ENCODE measurements at regions of chr12 and their contacts with region 1.

Region 1: DNA sequence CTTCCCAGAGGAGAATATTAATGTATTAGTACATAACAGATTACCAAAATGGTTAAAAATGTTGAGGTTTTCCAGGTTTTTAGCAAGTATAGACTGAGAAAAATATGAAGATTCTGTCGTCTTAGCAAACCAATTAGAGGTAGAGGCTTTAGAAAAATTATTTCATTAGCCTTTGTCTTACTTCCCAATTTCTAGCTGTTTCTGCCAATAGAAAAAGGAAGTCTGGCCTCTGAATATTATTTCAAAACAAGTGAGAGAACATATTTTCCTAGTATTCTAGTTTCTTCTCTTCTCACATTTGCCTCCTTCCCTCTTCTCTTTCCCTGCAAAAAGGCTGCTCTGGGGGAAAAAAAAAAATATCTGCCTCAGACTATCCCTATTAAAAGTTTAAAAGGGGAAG is 16.4 kb downstream of the IPO8 start:
- DNase-seq: no peak
- H3K4me3 ChIP-seq: no peak overlapping the region
- H3K27ac ChIP-seq: no peak overlapping the region
- H3K4me1 ChIP-seq: peaks cover 9% of the 10 kb centered on the region
- H3K27me3 ChIP-seq: no peaks in the 10 kb centered on the region
- CTCF ChIP-seq: no peak
- POLR2A ChIP-seq: no peak

Region 2: GRCh38 chr12:30643366-30643765 is 35.9 kb before region 1 on chr12:
- CTCF ChIA-PET with region 1: no interaction called
- POLR2A ChIA-PET with region 1: no interaction called
- dilution Hi-C with region 1: no loop called
- intact Hi-C with region 1: loop called (anchors 2 kb)
- DNase-seq: no peak
- H3K4me3 ChIP-seq: no peak overlapping the region
- H3K27ac ChIP-seq: no peak overlapping the region
- H3K4me1 ChIP-seq: no peaks in the 10 kb centered on the region
- H3K27me3 ChIP-seq: no peaks in the 10 kb centered on the region
- CTCF ChIP-seq: no peak
- POLR2A ChIP-seq: no peak

Region 3: DNA sequence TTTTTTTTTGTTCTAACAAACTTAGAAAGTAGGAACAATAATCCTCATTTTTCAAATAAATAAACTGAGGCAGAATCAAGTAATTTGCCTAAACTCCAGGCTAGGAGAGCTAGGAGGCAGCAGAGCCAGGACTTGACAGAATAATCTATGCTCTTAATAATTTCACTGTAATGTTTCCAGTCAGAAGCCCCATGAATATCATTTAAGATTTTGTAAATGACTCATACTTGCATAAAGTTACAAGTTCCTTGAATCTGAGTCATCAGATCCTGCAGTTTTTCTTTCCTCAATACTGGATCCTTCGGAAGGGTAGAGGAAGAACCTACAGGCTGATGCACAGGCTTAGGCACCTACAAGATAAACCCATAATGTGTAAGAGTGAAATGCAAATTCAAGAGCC is 46.5 kb after region 1 on chr12:
- CTCF ChIA-PET with region 1: no interaction called
- POLR2A ChIA-PET with region 1: no interaction called
- dilution Hi-C with region 1: no loop called
- intact Hi-C with region 1: no loop called
- DNase-seq: peak; percentile 73
- H3K4me3 ChIP-seq: no peak overlapping the region
- H3K27ac ChIP-seq: peak overlapping the region; percentile 28
- H3K4me1 ChIP-seq: peaks cover 18% of the 10 kb centered on the region
- H3K27me3 ChIP-seq: no peaks in the 10 kb centered on the region
- CTCF ChIP-seq: no peak
- POLR2A ChIP-seq: no peak

Region 4: DNA sequence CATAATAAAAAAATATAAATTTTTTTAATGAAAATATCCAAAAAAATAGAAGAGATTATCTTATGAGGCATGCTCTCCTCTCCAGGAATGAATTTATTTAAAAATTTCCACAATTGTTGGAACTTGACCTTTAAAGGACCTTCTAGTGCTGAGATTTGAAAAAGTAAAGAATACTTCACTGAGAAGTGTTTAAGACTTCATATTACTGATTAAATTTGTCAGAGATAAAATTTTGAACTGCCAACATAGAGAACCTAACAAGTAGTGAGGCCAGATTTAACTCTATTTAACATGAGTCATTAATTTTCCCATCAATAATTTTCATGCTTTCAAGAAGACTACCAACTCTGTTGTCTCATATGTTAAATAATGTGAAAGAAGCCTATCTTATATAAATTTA is 61.0 kb after region 1 on chr12:
- CTCF ChIA-PET with region 1: no interaction called
- POLR2A ChIA-PET with region 1: no interaction called
- dilution Hi-C with region 1: no loop called
- intact Hi-C with region 1: no loop called
- DNase-seq: no peak
- H3K4me3 ChIP-seq: no peak overlapping the region
- H3K27ac ChIP-seq: no peak overlapping the region
- H3K4me1 ChIP-seq: no peaks in the 10 kb centered on the region
- H3K27me3 ChIP-seq: no peaks in the 10 kb centered on the region
- CTCF ChIP-seq: no peak
- POLR2A ChIP-seq: no peak

Region 5: DNA sequence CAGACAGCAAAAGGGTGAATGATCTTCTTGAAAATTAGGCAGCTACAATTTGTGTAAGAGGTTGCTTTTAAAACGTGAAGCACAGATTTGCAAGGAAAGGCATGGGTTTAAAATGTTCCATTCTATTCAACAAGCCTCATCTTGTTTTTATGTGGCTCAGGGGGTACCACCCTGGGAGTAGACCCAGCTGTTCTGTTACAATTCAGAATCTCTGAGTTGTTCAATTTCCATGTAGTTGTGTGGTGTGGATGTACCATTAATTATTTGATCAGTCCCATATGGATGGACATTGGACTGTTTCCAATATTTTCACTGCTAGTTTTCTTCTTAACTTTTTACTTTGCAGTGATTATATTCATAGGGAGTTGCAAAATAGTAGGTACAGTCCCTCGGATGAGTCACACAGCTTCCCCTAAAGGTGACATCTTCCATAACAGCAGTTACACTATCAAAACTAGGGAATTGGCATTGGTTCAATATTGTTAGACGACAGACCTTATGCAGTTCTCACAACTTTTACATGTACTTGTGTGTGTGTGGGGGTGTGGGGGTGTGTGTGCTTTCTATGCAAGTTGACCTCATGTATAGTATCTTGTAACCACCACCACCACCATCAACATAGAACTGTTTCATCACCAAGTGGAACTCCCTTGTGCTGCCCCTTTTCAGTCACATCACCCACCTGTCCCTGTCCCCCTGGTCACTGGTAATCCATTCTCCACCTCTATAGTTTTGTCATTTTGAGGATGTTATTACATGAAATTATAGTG is 134.5 kb after region 1 on chr12:
- CTCF ChIA-PET with region 1: no interaction called
- POLR2A ChIA-PET with region 1: no interaction called
- dilution Hi-C with region 1: no loop called
- intact Hi-C with region 1: no loop called
- DNase-seq: no peak
- H3K4me3 ChIP-seq: no peak overlapping the region
- H3K27ac ChIP-seq: no peak overlapping the region
- H3K4me1 ChIP-seq: no peaks in the 10 kb centered on the region
- H3K27me3 ChIP-seq: peaks cover 2 to 4% of the 10 kb centered on the region in 2 experiments
- CTCF ChIP-seq: no peak
- POLR2A ChIP-seq: no peak